ENCODE measurements at regions of chr6 and their contacts with region 1.

Region 1: GRCh38 chr6:100818066-100818465 is 63.1 kb downstream of the ASCC3 start:
- DNase-seq: no peak
- ATAC-seq: no peak
- H3K4me3 Mint-ChIP-seq: no peak overlapping the region
- H3K27ac Mint-ChIP-seq: no peak overlapping the region
- H3K4me1 Mint-ChIP-seq: peaks cover 11 to 37% (median 21%) of the 10 kb centered on the region in 4 donors
- H3K27me3 Mint-ChIP-seq: no peaks in the 10 kb centered on the region

Region 2: GRCh38 chr6:100880853-100881706 is 63.0 kb after region 1 on chr6 and contains the start of gene ASCC3:
- POLR2A ChIA-PET with region 1: interaction called, 12 read pairs
- DNase-seq: peak; percentile 79 to 90 (median 86)
- ATAC-seq: peak; percentile 94 to 95
- H3K4me3 Mint-ChIP-seq: peak within 1 kb of the TSS; percentile 97 to 100 (median 100)
- H3K27ac Mint-ChIP-seq: peak within 1 kb of the TSS; percentile 94 to 100 (median 99)
- H3K4me1 Mint-ChIP-seq: peaks cover 13 to 57% (median 50%) of the 10 kb centered on the region in 4 donors
- H3K27me3 Mint-ChIP-seq: peaks cover 0 to 3% (median 0%) of the 10 kb centered on the region in 5 donors
- polyA plus RNA-seq, gene ASCC3: 18.0 to 24.6 (median 22.2) TPM

Measured in naive thymus-derived CD8-positive, alpha-beta T cell (primary cell).